ENCODE measurements at regions of chr16 and their contacts with region 1.

Region 1: DNA sequence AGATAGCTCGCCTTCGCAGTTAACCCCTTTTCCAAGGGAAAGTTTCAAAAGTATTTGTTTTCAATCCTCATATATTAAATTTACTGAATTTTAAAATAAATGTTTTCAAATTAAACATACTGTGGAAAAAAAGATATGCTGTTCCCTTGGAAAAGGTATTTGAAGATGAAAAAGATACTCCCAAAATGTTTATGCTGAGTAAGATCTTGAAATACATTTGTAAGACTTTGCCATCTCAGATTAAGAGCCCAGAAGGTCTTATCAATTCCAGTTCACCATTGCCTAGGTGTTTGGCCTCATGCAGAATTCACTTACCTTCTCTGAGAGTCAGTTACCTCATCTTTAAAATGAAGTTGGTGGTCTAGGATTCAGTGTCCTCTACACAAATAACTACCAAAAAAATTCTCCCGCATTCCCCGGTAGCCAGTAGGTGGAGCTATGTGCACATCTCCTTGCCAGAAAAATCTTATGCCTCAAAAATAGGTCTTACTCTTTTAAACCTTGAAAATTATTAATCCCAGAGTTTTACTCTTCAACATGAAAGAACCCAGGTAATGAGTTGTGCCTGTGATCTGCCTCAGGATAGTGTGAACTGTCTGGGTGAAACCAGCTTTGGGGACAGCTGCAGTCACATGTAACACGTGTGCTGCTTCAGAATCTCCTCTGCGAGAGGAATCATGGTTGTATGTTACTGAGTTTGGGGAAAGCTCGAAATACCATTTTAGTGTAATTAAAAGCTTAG is 178.3 kb downstream of the MRTFB start:
- DNase-seq: peak; percentile 53
- ATAC-seq: 0 out of 3 replicates have a peak, but pooled peaks have one; percentile 27
- H3K4me3 ChIP-seq: no peak overlapping the region
- H3K27ac ChIP-seq: no peak overlapping the region
- H3K4me1 ChIP-seq: no peaks in the 10 kb centered on the region
- H3K27me3 ChIP-seq: no peaks in the 10 kb centered on the region
- CTCF ChIP-seq: peak; percentile 87
- EP300 ChIP-seq: no peak
- POLR2A ChIP-seq: no peak
- RAD21 ChIP-seq: peak; percentile 88

Region 2: DNA sequence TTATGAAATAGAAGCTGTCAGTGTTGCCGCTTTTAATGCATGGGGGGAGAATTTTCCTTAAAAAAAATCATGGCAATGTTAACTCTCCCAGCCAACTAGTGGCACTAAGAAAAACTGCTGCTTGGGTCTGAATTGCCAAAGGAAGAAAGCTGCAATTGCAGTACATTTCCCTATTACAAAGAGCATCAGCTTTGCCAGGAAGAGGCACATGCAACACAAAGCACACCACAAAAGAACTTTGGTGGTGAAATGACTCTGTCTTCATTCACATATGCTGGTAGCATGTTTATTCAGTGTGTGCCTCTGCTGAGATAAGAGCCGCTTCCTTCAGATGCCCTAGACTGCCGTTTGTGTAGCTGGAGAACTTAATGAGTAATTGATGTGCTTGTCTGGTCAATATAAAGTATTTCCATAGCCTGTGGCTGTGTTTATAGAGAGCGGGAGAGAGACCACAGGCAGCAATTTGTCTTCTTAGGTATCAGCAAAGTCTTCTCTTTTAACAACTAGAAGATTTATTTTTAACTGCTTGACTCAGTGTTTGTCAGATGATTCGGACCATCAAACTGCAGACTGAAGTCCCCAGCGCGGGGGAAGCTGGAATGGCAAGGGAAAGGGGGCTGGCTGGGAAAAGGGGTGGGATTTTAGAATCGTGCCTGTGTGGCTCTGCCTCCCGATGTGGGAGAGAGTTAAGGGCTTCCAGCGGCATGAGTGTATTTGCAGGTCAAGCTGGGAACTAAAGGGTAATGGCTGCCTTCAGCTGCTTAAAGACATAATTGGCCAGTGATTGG is 63.3 kb before region 1 on chr16:
- CTCF ChIA-PET with region 1: no interaction called
- POLR2A ChIA-PET with region 1: no interaction called
- in situ Hi-C with region 1: no loop called
- intact Hi-C with region 1: no loop called
- DNase-seq: no peak
- ATAC-seq: peak; percentile 47; the same call in 2 of the 3 replicates
- H3K4me3 ChIP-seq: no peak overlapping the region
- H3K27ac ChIP-seq: no peak overlapping the region
- H3K4me1 ChIP-seq: no peaks in the 10 kb centered on the region
- H3K27me3 ChIP-seq: no peaks in the 10 kb centered on the region
- CTCF ChIP-seq: no peak
- EP300 ChIP-seq: no peak
- POLR2A ChIP-seq: no peak
- RAD21 ChIP-seq: 0 out of 2 replicates have a peak, but pooled peaks have one; percentile 17

Region 3: GRCh38 chr16:14285513-14286385 is 36.3 kb after region 1 on chr16:
- CTCF ChIA-PET with region 1: interaction called, 3 read pairs
- POLR2A ChIA-PET with region 1: no interaction called
- in situ Hi-C with region 1: no loop called
- intact Hi-C with region 1: loop called (anchors 5 kb)
- DNase-seq: peak; percentile 95
- ATAC-seq: peak; percentile 84
- H3K4me3 ChIP-seq: peak overlapping the region; percentile 77 to 94 (median 89)
- H3K27ac ChIP-seq: peak overlapping the region; percentile 35
- H3K4me1 ChIP-seq: peaks cover 36% of the 10 kb centered on the region
- H3K27me3 ChIP-seq: no peaks in the 10 kb centered on the region; a peak in 1 of 5 replicates
- CTCF ChIP-seq: peak; percentile 34
- EP300 ChIP-seq: peak; percentile 30 to 67; a peak in 3 of 4 replicates
- POLR2A ChIP-seq: no peak
- RAD21 ChIP-seq: peak; percentile 79

Region 4: GRCh38 chr16:14600164-14600563 is 350.7 kb after region 1 on chr16:
- CTCF ChIA-PET with region 1: interaction called, 13 read pairs
- POLR2A ChIA-PET with region 1: no interaction called
- in situ Hi-C with region 1: no loop called
- intact Hi-C with region 1: loop called (anchors 1 kb)
- DNase-seq: peak; percentile 23
- ATAC-seq: no peak
- H3K4me3 ChIP-seq: no peak overlapping the region
- H3K27ac ChIP-seq: no peak overlapping the region
- H3K4me1 ChIP-seq: no peaks in the 10 kb centered on the region
- H3K27me3 ChIP-seq: no peaks in the 10 kb centered on the region
- CTCF ChIP-seq: peak; percentile 38; the same call in 1 of the 2 replicates
- EP300 ChIP-seq: no peak
- POLR2A ChIP-seq: no peak
- RAD21 ChIP-seq: peak; percentile 14; the same call in 1 of the 2 replicates

Measured in HepG2 (cell line).